T-cell (primary cell): ENCODE measurements at regions of chr1 and their contacts with region 1.

Region 1: DNA sequence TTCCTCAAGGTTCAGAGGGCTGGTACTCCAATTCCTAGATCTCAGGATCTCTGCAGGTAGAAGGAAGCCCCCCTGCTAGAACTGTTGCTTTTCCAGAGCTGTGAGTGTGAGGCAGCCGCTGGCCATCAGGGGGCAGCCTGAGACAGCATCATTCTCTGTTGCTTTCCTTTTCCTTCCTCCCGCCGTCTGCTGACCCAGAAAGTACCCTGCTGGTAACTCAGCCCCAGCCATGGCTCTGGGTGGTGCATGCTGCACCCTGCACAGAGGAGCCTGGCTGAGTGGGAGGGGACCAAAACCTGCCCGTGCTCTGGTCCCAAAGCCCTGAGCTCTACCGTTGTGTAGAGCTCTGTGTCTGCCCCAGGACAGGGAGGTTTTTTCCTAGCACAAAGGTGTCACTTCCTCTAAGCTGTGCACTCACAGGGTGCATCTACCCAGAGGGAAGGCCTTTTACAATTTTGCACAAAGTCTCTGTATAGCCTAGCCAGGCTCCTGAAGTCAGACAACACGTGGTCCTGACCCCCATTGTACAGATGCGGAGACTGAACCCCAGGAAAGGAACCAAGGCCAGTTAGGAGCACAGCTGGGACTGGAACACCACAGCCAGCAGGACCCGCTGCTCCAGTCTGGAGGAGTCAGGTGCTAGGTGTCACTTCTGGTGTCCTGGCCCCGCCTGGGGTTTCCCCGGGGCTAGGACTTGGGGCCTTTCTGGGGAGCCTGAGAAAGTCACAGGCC is 5.6 kb upstream of the FAM131C start:
- DNase-seq: peak; percentile 35 to 85 (median 65)
- ATAC-seq: peak; percentile 83 to 88 (median 88)
- H3K4me3 ChIP-seq: peak overlapping the region; percentile 34 to 39
- H3K4me3 Mint-ChIP-seq: peak overlapping the region; percentile 63 to 78 (median 70)
- H3K27ac ChIP-seq: peak overlapping the region; percentile 53
- H3K27ac Mint-ChIP-seq: peak overlapping the region in 1 of 2 donors; percentile 76
- H3K4me1 ChIP-seq: peaks cover 2 to 24% of the 10 kb centered on the region in 2 experiments
- H3K4me1 Mint-ChIP-seq: peaks cover 6 to 15% (median 9%) of the 10 kb centered on the region in 3 donors
- H3K27me3 ChIP-seq: peaks cover 0 to 44% of the 10 kb centered on the region in 2 experiments
- H3K27me3 Mint-ChIP-seq: peaks cover 5 to 10% of the 10 kb centered on the region in 2 donors

Region 2: DNA sequence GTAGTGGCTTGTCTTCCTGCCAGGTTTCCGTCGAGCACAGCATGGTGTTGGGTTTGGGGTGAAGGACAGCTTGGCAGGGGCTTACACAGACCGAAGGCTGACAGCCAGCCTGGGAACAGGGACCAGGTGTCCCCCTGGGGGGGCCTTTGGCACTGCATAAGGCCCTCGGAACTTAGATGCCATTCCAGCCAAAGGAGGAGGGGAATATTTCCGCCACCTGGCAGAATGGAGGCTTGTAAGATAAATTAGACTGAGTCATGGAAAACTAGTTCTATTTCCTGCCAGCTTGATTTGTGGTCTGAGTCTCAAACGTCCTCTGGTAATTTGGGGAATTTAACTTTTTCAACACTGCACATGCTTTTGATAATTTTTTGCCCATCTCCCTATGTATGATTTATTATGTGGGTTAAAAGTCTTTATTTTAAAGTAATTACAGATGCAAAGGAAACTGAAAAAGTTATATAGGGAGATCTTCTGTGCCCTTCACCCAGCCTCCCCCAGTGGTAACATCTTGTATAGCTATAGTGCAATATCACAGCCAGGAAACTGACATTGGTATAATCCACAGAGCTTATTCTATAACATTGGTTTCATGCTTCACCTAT is 937.1 kb before region 1 on chr1:
- CTCF ChIA-PET with region 1: no interaction called
- POLR2A ChIA-PET with region 1: no interaction called
- DNase-seq: no peak
- ATAC-seq: no peak
- H3K4me3 ChIP-seq: no peak overlapping the region
- H3K4me3 Mint-ChIP-seq: no peak overlapping the region
- H3K27ac ChIP-seq: no peak overlapping the region
- H3K27ac Mint-ChIP-seq: no peak overlapping the region
- H3K4me1 ChIP-seq: no peaks in the 10 kb centered on the region
- H3K4me1 Mint-ChIP-seq: no peaks in the 10 kb centered on the region
- H3K27me3 ChIP-seq: peaks cover 0 to 46% of the 10 kb centered on the region in 2 experiments
- H3K27me3 Mint-ChIP-seq: peaks cover 52 to 62% of the 10 kb centered on the region in 2 donors

Region 3: GRCh38 chr1:15946571-15947319 is 132.3 kb before region 1 on chr1:
- CTCF ChIA-PET with region 1: no interaction called
- POLR2A ChIA-PET with region 1: interaction called in 1 of 2 experiments, 11 read pairs
- DNase-seq: no peak
- ATAC-seq: no peak
- H3K4me3 ChIP-seq: no peak overlapping the region
- H3K4me3 Mint-ChIP-seq: no peak overlapping the region
- H3K27ac ChIP-seq: no peak overlapping the region
- H3K27ac Mint-ChIP-seq: peak overlapping the region in 1 of 2 donors; percentile 36
- H3K4me1 ChIP-seq: peaks cover under 1 to 50% of the 10 kb centered on the region in 2 experiments
- H3K4me1 Mint-ChIP-seq: peaks cover 30 to 48% (median 43%) of the 10 kb centered on the region in 3 donors
- H3K27me3 ChIP-seq: no peaks in the 10 kb centered on the region
- H3K27me3 Mint-ChIP-seq: no peaks in the 10 kb centered on the region

Region 4: DNA sequence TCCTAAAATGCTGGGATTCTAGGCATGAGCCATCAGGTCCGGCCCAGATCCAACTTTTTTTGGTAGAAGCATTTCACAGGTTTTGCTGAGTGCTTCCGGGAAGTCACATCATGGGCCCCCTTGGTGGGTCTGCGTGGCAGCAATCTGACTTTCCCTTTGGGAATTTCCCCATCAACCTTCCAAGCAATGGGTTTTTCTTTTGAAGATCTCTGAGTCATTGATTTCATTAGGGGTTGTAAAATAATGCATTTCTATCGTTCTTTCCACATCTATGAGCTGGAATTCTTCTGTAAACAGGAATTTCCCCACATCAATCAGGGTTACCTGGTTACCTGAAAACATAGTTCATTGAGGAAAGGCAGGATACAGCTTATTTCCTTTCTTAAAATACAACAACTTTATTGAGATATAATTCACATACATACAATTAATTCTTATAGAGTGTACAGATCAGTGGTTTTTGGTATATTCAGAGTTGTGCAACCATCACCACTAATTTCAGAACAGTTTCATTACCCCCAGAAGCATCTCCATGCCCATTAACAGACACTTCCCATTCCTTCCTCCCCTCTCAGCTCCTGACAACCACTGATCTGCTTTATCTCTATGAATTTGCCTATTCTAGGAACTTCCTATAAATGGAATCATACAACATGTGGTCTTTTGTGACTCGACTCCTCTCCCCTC is 93.3 kb before region 1 on chr1:
- CTCF ChIA-PET with region 1: no interaction called
- POLR2A ChIA-PET with region 1: no interaction called
- DNase-seq: no peak
- ATAC-seq: no peak
- H3K4me3 ChIP-seq: no peak overlapping the region
- H3K4me3 Mint-ChIP-seq: no peak overlapping the region
- H3K27ac ChIP-seq: no peak overlapping the region
- H3K27ac Mint-ChIP-seq: no peak overlapping the region
- H3K4me1 ChIP-seq: no peaks in the 10 kb centered on the region
- H3K4me1 Mint-ChIP-seq: no peaks in the 10 kb centered on the region
- H3K27me3 ChIP-seq: peaks cover 0 to 8% of the 10 kb centered on the region in 2 experiments
- H3K27me3 Mint-ChIP-seq: peaks cover 0 to 1% of the 10 kb centered on the region in 2 donors

Region 5: GRCh38 chr1:16153999-16154673 is 75.0 kb after region 1 on chr1:
- CTCF ChIA-PET with region 1: interaction called, 4 to 11 read pairs
- POLR2A ChIA-PET with region 1: no interaction called
- DNase-seq: no peak
- ATAC-seq: no peak
- H3K4me3 ChIP-seq: peak overlapping the region; percentile 49 to 55
- H3K4me3 Mint-ChIP-seq: peak overlapping the region; percentile 34 to 68 (median 56)
- H3K27ac ChIP-seq: no peak overlapping the region
- H3K27ac Mint-ChIP-seq: no peak overlapping the region
- H3K4me1 ChIP-seq: peaks cover 55 to 79% of the 10 kb centered on the region in 2 experiments
- H3K4me1 Mint-ChIP-seq: peaks cover 42 to 61% (median 49%) of the 10 kb centered on the region in 3 donors
- H3K27me3 ChIP-seq: peaks cover 0 to 71% of the 10 kb centered on the region in 2 experiments
- H3K27me3 Mint-ChIP-seq: peaks cover 3 to 8% of the 10 kb centered on the region in 2 donors

Region 6: DNA sequence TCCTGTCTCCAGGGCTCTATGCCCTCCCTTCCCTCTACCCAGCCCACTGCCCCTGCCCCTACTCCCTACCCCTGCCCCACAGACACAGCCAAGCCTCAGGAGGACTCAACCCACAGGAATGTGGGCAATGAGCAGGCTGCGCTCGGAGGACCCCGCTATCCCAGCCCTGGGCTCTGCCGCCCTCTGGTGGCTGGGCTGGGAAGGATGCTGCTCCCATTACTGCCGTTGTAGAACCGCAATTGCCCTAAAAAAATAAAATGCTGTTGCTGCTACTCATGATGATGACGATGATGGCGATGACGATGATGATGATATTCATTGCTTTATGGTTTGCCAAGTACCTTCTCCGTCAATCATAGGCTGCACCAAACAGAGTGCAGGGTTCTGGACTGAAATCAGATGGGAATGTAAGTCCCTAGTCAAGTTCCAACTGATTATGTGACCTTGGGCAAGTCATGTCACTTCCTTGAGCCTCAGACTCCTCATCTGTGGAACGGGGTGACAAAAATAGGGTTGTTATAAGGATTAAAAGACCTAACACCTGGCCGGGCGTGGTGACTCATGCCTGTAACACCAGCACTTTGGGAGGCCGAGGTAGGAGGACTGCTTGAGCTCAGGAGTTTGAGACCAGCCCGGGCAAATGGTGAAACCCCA is 108.8 kb after region 1 on chr1:
- CTCF ChIA-PET with region 1: interaction called, 14 to 44 read pairs
- POLR2A ChIA-PET with region 1: no interaction called
- DNase-seq: peak; percentile 31 to 88 (median 69)
- ATAC-seq: peak; percentile 78 to 96 (median 82)
- H3K4me3 ChIP-seq: no peak overlapping the region
- H3K4me3 Mint-ChIP-seq: no peak overlapping the region
- H3K27ac ChIP-seq: no peak overlapping the region
- H3K27ac Mint-ChIP-seq: no peak overlapping the region
- H3K4me1 ChIP-seq: peaks cover 0 to 7% of the 10 kb centered on the region in 2 experiments
- H3K4me1 Mint-ChIP-seq: peaks cover 0 to 5% (median 4%) of the 10 kb centered on the region in 3 donors
- H3K27me3 ChIP-seq: peaks cover 0 to 36% of the 10 kb centered on the region in 2 experiments
- H3K27me3 Mint-ChIP-seq: peaks cover 10% of the 10 kb centered on the region in 2 donors

Region 7: DNA sequence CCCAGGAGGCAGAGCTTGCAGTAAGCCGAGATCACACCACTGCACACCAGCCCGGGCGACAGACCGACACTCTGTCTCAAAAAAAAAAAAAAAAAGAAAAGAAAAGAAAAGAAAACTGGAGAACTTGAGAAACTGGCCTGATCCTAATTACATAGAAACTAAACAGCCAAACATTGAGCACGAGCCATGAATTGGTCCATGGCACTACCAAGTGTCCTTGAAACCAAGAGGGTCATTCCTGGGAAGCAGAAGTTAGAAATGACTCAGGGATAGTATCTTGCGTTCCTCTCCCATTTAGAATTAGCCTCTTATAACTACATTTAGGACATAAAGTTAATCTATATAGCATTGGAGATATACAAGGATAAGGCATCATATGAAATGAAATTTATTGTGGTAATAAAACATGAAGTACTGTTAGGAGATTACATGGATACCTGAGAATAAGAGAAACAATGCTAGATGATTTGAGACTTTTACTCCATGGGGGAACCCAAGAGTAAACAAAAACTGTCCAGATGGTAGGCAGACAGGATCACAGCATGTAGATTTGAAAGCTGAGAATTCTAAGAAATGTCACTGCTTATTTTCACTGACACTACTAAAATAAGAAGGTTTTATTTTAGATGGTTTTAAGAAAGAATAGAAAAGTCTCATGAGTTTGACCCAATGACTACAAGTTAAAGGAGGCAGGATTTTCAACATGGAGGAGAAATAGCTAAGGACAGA is 197.4 kb after region 1 on chr1:
- CTCF ChIA-PET with region 1: no interaction called
- POLR2A ChIA-PET with region 1: no interaction called
- DNase-seq: no peak
- ATAC-seq: no peak
- H3K4me3 ChIP-seq: no peak overlapping the region
- H3K4me3 Mint-ChIP-seq: no peak overlapping the region
- H3K27ac ChIP-seq: no peak overlapping the region
- H3K27ac Mint-ChIP-seq: no peak overlapping the region
- H3K4me1 ChIP-seq: no peaks in the 10 kb centered on the region
- H3K4me1 Mint-ChIP-seq: peaks cover 6 to 42% (median 20%) of the 10 kb centered on the region in 3 donors
- H3K27me3 ChIP-seq: no peaks in the 10 kb centered on the region
- H3K27me3 Mint-ChIP-seq: no peaks in the 10 kb centered on the region